ENCODE measurements at regions of chr10 and their contacts with region 1.

Region 1: GRCh38 chr10:131899695-131900349 is 986 bp upstream of the PPP2R2D start:
- DNase-seq: no peak
- H3K4me3 ChIP-seq: peak overlapping the region; percentile 92
- H3K27ac ChIP-seq: peak overlapping the region; percentile 98
- H3K4me1 ChIP-seq: peaks cover 50% of the 10 kb centered on the region
- H3K27me3 ChIP-seq: peaks cover 24% of the 10 kb centered on the region
- CTCF ChIP-seq: peak; percentile 8

Region 2: DNA sequence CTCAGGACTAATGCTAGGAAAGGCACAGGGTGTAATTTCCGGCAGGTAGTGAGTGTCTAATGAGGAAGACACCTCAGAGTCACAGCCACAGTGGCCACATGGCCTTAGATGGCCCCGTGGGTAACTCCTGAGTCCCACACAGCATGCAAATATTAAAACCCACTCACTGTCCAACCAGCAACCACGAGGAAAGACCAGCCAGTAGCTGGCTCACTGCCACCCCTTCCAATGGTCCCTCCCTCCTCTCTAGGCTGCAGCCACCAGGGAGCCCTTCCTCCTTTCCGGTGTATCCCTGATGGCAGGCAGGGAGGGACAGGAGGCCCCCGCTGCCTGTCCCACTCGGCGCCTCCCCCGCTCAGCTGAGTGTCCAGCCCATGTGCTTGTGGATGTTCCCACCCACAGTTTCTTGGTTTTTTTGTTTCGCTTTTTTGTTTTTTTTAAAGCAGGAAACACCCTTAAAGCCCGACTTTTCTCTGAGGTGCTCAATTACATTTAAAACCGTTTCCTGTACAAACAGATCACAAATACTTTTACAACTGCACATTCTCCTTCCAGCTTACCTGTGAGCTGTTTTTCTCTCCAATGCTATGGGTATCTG is 72.8 kb after region 1 on chr10:
- intact Hi-C with region 1: loop called (anchors 10 kb)
- DNase-seq: peak; percentile 81
- H3K4me3 ChIP-seq: peak overlapping the region; percentile 43
- H3K27ac ChIP-seq: peak overlapping the region; percentile 79
- H3K4me1 ChIP-seq: peaks cover 58% of the 10 kb centered on the region
- H3K27me3 ChIP-seq: no peaks in the 10 kb centered on the region
- CTCF ChIP-seq: no peak

Region 3: DNA sequence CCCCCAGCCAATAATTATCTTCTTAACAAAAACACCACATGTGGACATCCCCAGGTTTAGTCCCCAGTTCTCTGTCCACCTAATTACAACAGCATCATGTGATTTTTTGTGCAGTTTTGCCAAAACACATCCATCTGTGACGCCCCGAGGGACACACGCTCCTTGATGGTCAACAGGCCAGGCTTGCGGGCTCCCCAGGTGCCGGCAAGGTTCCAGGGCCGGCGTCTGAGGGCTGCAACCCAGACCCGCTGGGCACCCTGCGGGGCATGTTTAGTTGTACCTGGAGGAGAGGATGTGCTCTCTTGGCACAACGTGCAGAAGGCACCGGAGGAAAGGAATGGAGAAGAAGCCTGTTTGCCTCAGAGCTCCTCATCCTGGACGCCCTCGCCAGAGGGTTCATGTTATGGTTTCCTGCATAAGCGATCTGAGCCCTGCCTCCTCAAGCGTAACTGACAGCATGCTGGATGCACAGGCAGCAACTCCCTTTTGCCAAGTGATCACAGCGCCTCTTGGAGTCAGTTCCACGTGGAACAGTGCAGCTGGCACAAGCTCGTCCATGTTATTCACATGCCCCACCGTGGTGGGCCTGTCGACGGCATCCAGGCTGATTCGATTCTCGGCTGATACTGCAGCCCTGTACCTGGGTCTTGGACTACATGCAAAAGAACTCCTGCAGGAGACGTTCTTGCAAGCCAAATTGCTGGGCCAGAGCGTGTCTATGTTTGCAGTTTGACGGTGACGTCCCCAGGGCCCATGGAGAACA is 207.5 kb after region 1 on chr10:
- intact Hi-C with region 1: no loop called
- DNase-seq: no peak
- H3K4me3 ChIP-seq: no peak overlapping the region
- H3K27ac ChIP-seq: no peak overlapping the region
- H3K4me1 ChIP-seq: no peaks in the 10 kb centered on the region
- H3K27me3 ChIP-seq: no peaks in the 10 kb centered on the region
- CTCF ChIP-seq: no peak

Measured in left ventricle myocardium inferior (tissue), 1 donor.